Lower leg skin (tissue), 4 donors: ENCODE measurements at regions of chr21 and their contacts with region 1.

Region 1: DNA sequence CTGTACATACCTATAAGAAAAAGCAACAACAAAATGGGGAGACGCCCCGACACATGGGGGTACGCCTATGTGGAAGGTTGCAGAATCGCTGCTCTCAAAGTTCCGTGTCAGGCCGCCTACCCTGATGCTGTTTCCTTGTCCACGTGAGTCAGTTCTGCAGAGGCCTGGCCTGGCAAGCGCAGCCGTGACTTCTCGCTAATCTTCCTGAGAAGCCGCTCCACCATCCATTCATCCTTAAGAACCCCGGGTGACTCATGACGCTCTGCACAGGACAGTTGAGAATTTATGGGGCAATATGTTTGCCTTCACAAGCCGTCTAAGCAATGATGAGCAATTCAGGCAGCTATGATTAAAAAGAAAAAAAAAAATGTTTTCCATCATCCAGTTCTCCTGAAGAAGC is 122.3 kb upstream of the TMPRSS2 start:
- DNase-seq: peak in 1 of 2 donors; percentile 73
- H3K4me3 ChIP-seq: no peak overlapping the region
- CTCF ChIP-seq: no peak
- POLR2A ChIP-seq: no peak

Region 2: GRCh38 chr21:41712201-41712600 is 82.0 kb after region 1 on chr21:
- intact Hi-C with region 1: loop called (anchors 5 kb)
- DNase-seq: no peak
- H3K4me3 ChIP-seq: no peak overlapping the region
- CTCF ChIP-seq: no peak
- POLR2A ChIP-seq: no peak